Breast epithelium (tissue), 4 donors: ENCODE measurements at regions of chr14 and their contacts with region 1.

Region 1: GRCh38 chr14:89309670-89310177 is 107.3 kb downstream of the FOXN3 start:
- DNase-seq: no peak
- H3K4me3 ChIP-seq: no peak overlapping the region
- H3K27ac ChIP-seq: no peak overlapping the region
- H3K4me1 ChIP-seq: no peaks in the 10 kb centered on the region
- H3K27me3 ChIP-seq: no peaks in the 10 kb centered on the region
- CTCF ChIP-seq: no peak
- POLR2A ChIP-seq: no peak

Region 2: GRCh38 chr14:88639221-88639620 is 670.5 kb before region 1 on chr14:
- intact Hi-C with region 1: no loop called
- DNase-seq: no peak
- H3K4me3 ChIP-seq: no peak overlapping the region
- H3K27ac ChIP-seq: no peak overlapping the region
- H3K4me1 ChIP-seq: no peaks in the 10 kb centered on the region
- H3K27me3 ChIP-seq: no peaks in the 10 kb centered on the region
- CTCF ChIP-seq: no peak
- POLR2A ChIP-seq: no peak

Region 3: GRCh38 chr14:89365061-89365801 is 55.5 kb after region 1 on chr14:
- intact Hi-C with region 1: loop called (anchors 2 kb)
- DNase-seq: no peak
- H3K4me3 ChIP-seq: no peak overlapping the region
- H3K27ac ChIP-seq: no peak overlapping the region
- H3K4me1 ChIP-seq: no peaks in the 10 kb centered on the region
- H3K27me3 ChIP-seq: no peaks in the 10 kb centered on the region
- CTCF ChIP-seq: no peak
- POLR2A ChIP-seq: no peak